CD8-positive, alpha-beta memory T cell (primary cell): ENCODE measurements at regions of chr1 and their contacts with region 1.

Region 1: GRCh38 chr1:25520446-25521061 is 22.9 kb upstream of the LDLRAP1 start:
- DNase-seq: peak; percentile 43 to 77 (median 60)
- H3K4me3 ChIP-seq: no peak overlapping the region
- H3K4me3 Mint-ChIP-seq: no peak overlapping the region
- H3K27ac ChIP-seq: no peak overlapping the region
- H3K27ac Mint-ChIP-seq: peak overlapping the region in 7 of 8 donors; percentile 19 to 90 (median 65)
- H3K4me1 ChIP-seq: peaks cover 6% of the 10 kb centered on the region
- H3K4me1 Mint-ChIP-seq: peaks cover 9 to 11% (median 10%) of the 10 kb centered on the region in 3 donors
- H3K27me3 ChIP-seq: no peaks in the 10 kb centered on the region
- H3K27me3 Mint-ChIP-seq: peaks cover 0 to 3% of the 10 kb centered on the region in 2 donors

Region 2: GRCh38 chr1:25473653-25474225 is 46.8 kb before region 1 on chr1:
- CTCF ChIA-PET with region 1: no interaction called
- POLR2A ChIA-PET with region 1: no interaction called
- DNase-seq: peak in 1 of 5 donors; percentile 26
- H3K4me3 ChIP-seq: peak overlapping the region; percentile 14
- H3K4me3 Mint-ChIP-seq: peak overlapping the region in 6 of 7 donors; percentile 14 to 60 (median 52)
- H3K27ac ChIP-seq: no peak overlapping the region
- H3K27ac Mint-ChIP-seq: peak overlapping the region in 6 of 8 donors; percentile 25 to 86 (median 70)
- H3K4me1 ChIP-seq: peaks cover 50% of the 10 kb centered on the region
- H3K4me1 Mint-ChIP-seq: peaks cover 29 to 63% (median 32%) of the 10 kb centered on the region in 3 donors
- H3K27me3 ChIP-seq: no peaks in the 10 kb centered on the region
- H3K27me3 Mint-ChIP-seq: no peaks in the 10 kb centered on the region

Region 3: GRCh38 chr1:25484096-25484495 is 36.5 kb before region 1 on chr1:
- CTCF ChIA-PET with region 1: interaction called, 3 read pairs
- POLR2A ChIA-PET with region 1: interaction called, 10 read pairs
- DNase-seq: no peak
- H3K4me3 ChIP-seq: no peak overlapping the region
- H3K4me3 Mint-ChIP-seq: no peak overlapping the region
- H3K27ac ChIP-seq: no peak overlapping the region
- H3K27ac Mint-ChIP-seq: no peak overlapping the region
- H3K4me1 ChIP-seq: peaks cover 5% of the 10 kb centered on the region
- H3K4me1 Mint-ChIP-seq: peaks cover 3 to 16% (median 7%) of the 10 kb centered on the region in 3 donors
- H3K27me3 ChIP-seq: no peaks in the 10 kb centered on the region
- H3K27me3 Mint-ChIP-seq: no peaks in the 10 kb centered on the region

Region 4: GRCh38 chr1:25503551-25504426 is 16.8 kb before region 1 on chr1:
- CTCF ChIA-PET with region 1: interaction called, 79 read pairs
- POLR2A ChIA-PET with region 1: interaction called, 5 read pairs
- DNase-seq: peak; percentile 43 to 78 (median 53)
- H3K4me3 ChIP-seq: no peak overlapping the region
- H3K4me3 Mint-ChIP-seq: no peak overlapping the region
- H3K27ac ChIP-seq: no peak overlapping the region
- H3K27ac Mint-ChIP-seq: peak overlapping the region in 5 of 8 donors; percentile 26 to 94 (median 39)
- H3K4me1 ChIP-seq: peaks cover 23% of the 10 kb centered on the region
- H3K4me1 Mint-ChIP-seq: peaks cover 8 to 25% (median 19%) of the 10 kb centered on the region in 3 donors
- H3K27me3 ChIP-seq: no peaks in the 10 kb centered on the region
- H3K27me3 Mint-ChIP-seq: no peaks in the 10 kb centered on the region